ENCODE measurements at regions of chr17 and their contacts with region 1.

Region 1: GRCh38 chr17:68468334-68468733 is 11.0 kb upstream of the WIPI1 start:
- DNase-seq: no peak
- ATAC-seq: no peak
- H3K4me3 Mint-ChIP-seq: no peak overlapping the region
- H3K27ac Mint-ChIP-seq: no peak overlapping the region
- H3K4me1 Mint-ChIP-seq: peaks cover 10% of the 10 kb centered on the region
- H3K27me3 Mint-ChIP-seq: peaks cover 21% of the 10 kb centered on the region

Region 2: DNA sequence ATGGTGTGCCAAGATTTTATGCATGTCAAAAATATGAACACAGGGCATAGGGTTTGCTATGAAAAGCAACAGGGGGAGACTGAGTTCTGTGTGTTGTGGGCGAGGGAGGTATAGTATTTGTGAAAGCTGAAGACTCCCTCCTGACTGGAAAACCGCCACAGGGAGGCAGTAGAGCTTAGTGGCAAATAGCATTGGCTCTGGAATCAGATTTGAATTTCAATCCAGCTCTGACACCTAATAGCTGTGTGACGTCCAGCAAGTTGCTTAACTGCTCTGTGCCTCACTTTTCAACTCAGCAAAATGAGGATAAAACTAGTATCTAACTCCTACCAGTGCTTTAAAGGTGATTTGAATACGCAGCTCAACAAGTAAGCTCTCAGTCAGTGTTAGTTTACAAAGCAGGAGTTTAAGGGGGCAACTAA is 410.8 kb before region 1 on chr17:
- CTCF ChIA-PET with region 1: interaction called, 10 read pairs
- POLR2A ChIA-PET with region 1: no interaction called
- DNase-seq: peak; percentile 67
- ATAC-seq: peak; percentile 86
- H3K4me3 Mint-ChIP-seq: no peak overlapping the region
- H3K27ac Mint-ChIP-seq: no peak overlapping the region
- H3K4me1 Mint-ChIP-seq: peaks cover 17% of the 10 kb centered on the region
- H3K27me3 Mint-ChIP-seq: peaks cover 3% of the 10 kb centered on the region

Region 3: GRCh38 chr17:68172461-68172954 is 295.8 kb before region 1 on chr17:
- CTCF ChIA-PET with region 1: interaction called, 13 read pairs
- POLR2A ChIA-PET with region 1: no interaction called
- DNase-seq: peak; percentile 83
- ATAC-seq: peak; percentile 52
- H3K4me3 Mint-ChIP-seq: no peak overlapping the region
- H3K27ac Mint-ChIP-seq: no peak overlapping the region
- H3K4me1 Mint-ChIP-seq: peaks cover 42% of the 10 kb centered on the region
- H3K27me3 Mint-ChIP-seq: no peaks in the 10 kb centered on the region

Region 4: DNA sequence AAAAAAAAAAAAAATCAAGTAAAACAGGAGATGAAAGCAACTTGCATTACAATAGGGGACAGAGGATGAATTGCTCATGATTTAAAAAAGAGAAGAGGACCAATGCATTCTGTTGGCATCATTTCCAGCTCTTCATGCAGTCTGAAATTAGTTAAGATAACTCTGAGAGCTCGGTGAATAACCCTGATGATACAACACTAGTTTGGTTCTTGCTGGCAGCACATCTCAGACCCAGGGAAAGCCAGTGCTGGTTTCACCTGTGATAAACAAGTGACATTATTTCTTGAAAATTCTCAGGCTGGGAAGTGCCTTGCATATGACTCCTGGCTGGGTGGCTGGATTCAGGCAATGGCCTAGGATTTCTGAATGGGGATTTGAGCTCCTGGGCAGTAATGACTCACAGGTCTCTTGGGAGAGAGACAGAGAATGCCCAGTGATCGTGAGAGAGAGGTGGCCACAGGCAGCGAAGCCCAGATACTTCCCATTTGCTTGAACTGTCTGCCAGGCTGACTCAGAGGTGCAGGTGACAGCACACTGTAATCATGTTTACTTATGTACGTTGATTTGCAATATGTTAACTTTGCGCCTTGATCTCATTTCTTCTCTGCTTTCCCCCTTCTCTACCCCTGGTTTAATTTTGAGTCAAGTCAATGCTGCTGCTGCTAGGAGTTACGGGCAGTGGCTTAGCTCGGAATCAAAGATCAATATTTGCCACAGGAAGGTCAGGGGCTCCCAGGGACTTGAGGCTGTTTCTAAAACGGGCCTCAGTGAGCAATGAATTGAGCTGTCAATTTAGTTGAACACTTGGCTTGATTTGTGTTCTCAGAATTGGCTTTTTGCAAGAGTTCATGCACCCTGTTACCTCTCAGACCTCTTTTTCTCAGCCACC is 150.0 kb before region 1 on chr17:
- CTCF ChIA-PET with region 1: no interaction called
- POLR2A ChIA-PET with region 1: no interaction called
- DNase-seq: no peak
- ATAC-seq: no peak
- H3K4me3 Mint-ChIP-seq: no peak overlapping the region
- H3K27ac Mint-ChIP-seq: no peak overlapping the region
- H3K4me1 Mint-ChIP-seq: peaks cover 39% of the 10 kb centered on the region
- H3K27me3 Mint-ChIP-seq: no peaks in the 10 kb centered on the region

Region 5: GRCh38 chr17:68457539-68458259 is 10.6 kb before region 1 on chr17:
- CTCF ChIA-PET with region 1: interaction called, 17 read pairs
- POLR2A ChIA-PET with region 1: no interaction called
- DNase-seq: peak; percentile 98
- ATAC-seq: peak; percentile 95
- H3K4me3 Mint-ChIP-seq: peak overlapping the region; percentile 77
- H3K27ac Mint-ChIP-seq: peak overlapping the region; percentile 88
- H3K4me1 Mint-ChIP-seq: peaks cover 82% of the 10 kb centered on the region
- H3K27me3 Mint-ChIP-seq: no peaks in the 10 kb centered on the region

Region 6: DNA sequence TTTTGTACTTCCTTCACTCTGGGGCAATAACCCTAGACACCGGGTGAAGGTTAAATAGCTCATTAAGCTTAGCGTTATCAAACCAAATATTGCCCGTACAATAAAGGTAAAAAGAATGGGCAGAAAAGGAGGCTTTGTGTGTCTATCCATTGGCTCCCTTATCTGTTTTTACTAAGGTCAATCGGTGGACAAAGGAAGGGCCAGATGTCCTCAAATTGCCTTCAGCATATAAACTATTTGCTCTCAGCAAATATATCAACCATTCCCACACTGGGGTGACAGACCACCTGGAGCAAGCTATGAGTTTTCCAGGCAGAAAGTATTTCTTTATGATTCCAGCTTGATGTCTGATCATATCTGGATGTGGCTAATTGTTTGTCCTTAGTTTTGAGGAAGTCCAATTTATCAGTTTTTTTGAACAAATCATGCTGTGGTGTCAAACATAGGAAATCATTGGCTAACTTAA is 14.3 kb after region 1 on chr17:
- CTCF ChIA-PET with region 1: interaction called, 29 read pairs
- POLR2A ChIA-PET with region 1: no interaction called
- DNase-seq: no peak
- ATAC-seq: no peak
- H3K4me3 Mint-ChIP-seq: no peak overlapping the region
- H3K27ac Mint-ChIP-seq: no peak overlapping the region
- H3K4me1 Mint-ChIP-seq: peaks cover 24% of the 10 kb centered on the region
- H3K27me3 Mint-ChIP-seq: peaks cover 36% of the 10 kb centered on the region

Region 7: DNA sequence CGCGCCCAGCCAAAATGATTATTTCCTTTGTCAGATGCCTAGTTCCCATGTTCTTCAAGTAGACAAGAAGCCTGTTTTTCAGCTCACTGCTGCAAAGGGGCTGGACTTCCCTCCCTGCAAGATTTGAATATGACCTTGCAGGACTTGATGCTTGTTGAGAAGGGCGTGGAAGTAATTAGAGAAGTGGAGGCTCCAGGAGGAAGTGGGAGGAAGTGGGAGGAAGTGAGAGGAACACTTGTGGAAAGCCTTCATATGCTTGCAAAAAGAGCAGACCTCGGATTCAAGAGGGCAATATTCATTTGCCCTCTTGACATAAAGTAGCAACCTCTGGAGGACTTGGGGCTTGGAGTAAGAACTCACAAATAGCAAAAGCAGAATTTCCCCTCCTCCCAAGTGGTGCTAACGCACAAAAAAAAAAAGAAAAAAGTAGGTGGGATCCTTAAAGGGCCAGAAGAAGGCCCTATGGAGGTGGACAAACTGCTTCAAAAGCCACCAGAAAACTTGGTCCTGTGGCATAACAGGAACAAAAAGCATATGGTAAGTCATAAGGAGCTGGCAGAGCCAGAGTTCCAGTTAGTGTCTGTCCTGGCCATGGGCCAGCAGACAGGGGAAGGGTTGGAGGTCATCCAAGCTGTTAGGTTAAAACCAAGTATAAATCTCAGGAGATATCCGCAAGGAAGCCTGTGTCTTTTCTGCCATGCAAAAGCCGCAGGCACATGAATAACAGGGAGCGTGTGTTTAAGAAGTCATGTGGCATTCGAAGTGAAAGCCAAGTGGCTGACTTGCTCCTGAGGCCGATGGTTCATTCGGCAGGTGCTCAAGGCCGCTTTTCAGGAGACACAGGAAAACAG is 23.3 kb after region 1 on chr17:
- CTCF ChIA-PET with region 1: interaction called, 29 read pairs
- POLR2A ChIA-PET with region 1: interaction called, 3 read pairs
- DNase-seq: no peak
- ATAC-seq: no peak
- H3K4me3 Mint-ChIP-seq: no peak overlapping the region
- H3K27ac Mint-ChIP-seq: no peak overlapping the region
- H3K4me1 Mint-ChIP-seq: peaks cover 38% of the 10 kb centered on the region
- H3K27me3 Mint-ChIP-seq: peaks cover 3% of the 10 kb centered on the region

Region 8: DNA sequence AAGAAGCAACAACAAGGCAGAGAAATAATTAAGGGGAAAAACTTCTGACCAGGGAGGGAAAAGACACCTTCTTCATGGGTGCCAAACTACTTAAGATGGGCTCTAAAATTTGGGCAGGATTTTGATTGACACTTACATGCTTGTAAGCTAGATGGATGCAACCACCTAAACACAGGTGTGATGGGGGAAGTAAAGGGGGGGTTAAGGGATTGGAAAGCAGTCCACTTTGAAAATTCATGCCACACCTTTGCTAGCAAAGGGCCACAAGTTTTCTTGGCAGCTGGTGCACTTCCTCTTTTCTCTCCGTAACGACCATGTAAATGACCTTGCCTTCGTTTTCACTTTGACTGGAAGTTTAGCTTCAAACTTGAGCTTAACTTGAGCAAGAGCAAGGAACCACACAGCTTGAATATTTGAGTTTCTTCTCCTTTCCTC is 29.6 kb after region 1 on chr17:
- CTCF ChIA-PET with region 1: interaction called, 22 read pairs
- POLR2A ChIA-PET with region 1: no interaction called
- DNase-seq: peak; percentile 33
- ATAC-seq: peak; percentile 50
- H3K4me3 Mint-ChIP-seq: peak overlapping the region; percentile 26
- H3K27ac Mint-ChIP-seq: peak overlapping the region; percentile 84
- H3K4me1 Mint-ChIP-seq: peaks cover 42% of the 10 kb centered on the region
- H3K27me3 Mint-ChIP-seq: peaks cover 6% of the 10 kb centered on the region

Measured in activated CD8-positive, alpha-beta T cell treated with anti-CD3 and anti-CD28 coated beads, Interleukin-2, amount 10 ng/mL, durations not matched to agents 7 days and 5 days (primary cell).